AG04449 (cell line): ENCODE measurements at regions of chr16 and their contacts with region 1.

Region 1: GRCh38 chr16:58000706-58001676 is at the start of gene USB1:
- DNase-seq: no peak
- H3K4me3 ChIP-seq: peak within 1 kb of the TSS; percentile 93
- CTCF ChIP-seq: peak; percentile 63

Region 2: DNA sequence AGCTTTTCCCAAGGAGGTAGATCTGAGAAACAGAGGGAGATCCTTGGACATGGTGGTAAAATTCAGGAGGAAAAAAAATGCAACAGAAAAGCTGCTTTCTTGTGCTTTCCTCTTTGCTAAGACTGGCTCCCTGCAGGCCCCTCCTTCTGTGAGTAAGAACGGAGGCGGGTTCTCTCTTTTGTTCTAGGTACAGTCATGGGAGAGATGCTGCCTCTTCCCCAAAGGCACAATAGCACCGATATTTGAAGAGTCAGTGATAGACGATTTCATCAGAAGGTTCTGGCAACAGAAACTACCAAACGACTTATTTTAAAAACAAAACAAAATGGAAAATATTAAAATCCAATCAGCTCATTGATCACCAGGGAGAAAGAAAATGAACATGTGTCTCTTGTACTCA is 166.1 kb before region 1 on chr16:
- CTCF ChIA-PET with region 1: no interaction called
- POLR2A ChIA-PET with region 1: no interaction called
- DNase-seq: no peak
- H3K4me3 ChIP-seq: no peak overlapping the region
- CTCF ChIP-seq: no peak

Region 3: DNA sequence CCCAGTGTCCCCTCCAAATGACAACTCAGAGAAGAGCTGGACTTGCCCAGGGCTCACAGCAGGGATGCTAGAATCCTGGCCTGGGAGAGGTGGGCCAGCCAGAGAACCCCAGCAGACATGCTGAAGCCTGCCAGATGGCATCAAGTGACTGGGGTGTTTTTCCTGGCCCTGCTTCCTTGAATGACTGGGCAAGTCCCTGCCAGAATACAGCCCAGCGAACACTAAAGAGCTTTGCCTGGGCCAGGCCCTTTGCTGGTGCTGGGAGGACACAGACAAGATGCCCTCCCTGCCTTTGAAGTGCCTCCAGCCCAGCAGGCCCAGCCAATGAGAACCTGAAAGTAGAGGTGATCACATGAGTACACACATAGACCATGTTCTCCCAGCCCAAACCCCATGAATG is 12.1 kb before region 1 on chr16:
- CTCF ChIA-PET with region 1: interaction called, 32 read pairs
- POLR2A ChIA-PET with region 1: no interaction called
- DNase-seq: no peak
- H3K4me3 ChIP-seq: no peak overlapping the region
- CTCF ChIP-seq: no peak

Region 4: DNA sequence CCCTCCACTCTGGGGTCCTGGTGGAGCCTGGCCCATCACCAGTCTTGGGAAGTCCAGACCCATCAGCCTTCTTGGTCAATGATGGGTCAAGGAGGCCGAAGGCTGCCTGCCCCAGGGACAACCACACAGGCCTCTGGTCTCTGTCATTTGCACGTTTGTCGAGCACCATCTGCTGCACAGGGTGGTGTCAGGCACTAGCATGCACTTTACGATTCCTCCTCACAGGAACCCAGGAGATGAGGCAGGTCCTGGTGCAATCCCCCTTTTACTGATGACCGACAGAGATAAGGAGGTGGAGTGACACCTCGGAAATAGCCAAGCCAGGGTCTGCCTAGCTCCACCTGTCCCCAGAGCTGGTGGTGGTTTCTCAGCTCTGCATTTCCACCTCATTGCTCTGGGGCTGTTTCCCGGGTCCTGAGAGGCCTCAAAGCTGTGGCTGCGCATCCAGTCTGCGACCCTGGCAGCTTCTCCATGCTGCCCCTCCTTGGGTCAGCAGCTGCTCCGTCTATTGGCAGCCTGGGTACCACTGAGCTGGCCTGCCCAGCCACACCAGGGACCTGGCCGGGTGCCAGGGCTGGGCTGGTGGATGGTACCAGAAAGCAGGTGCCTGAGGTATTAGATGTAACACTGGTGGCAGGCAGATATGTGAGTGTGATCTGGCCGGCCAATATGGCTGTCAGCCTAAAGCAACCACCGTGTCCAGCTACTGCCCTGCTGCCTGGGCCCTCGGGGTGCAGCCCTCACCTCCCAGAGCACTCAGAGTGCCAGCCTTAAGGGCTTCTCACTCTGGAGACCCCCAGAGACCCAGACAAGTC is 34.6 kb after region 1 on chr16:
- CTCF ChIA-PET with region 1: no interaction called
- POLR2A ChIA-PET with region 1: no interaction called
- DNase-seq: no peak
- H3K4me3 ChIP-seq: no peak overlapping the region
- CTCF ChIP-seq: no peak